GM12878 (cell line): ENCODE measurements at regions of chr7 and their contacts with region 1.

Region 1: DNA sequence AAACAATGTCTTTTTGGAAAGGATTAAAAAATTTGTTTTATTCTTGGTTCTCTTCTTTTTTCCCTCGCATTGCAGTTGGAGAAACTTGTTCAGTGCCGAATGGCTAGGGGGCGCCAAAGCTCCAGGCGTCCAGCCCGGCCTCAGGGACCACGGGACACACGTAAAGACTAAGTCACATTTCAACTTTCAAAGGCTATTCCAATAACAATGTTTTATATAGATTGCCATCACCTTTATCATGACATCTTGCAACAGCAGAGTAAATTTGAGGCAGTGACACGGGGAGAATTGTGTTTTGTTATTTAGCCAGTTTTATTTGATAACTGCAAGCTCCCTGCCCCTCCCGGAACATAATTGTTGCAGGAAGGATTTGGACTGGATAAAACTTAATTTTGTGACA is 2.2 kb upstream of the IGFBP3 start:
- DNase-seq: no peak
- ATAC-seq: peak; percentile 75
- H3K4me3 ChIP-seq: no peak overlapping the region
- H3K27ac ChIP-seq: no peak overlapping the region
- H3K4me1 ChIP-seq: no peaks in the 10 kb centered on the region
- H3K27me3 ChIP-seq: peaks cover 1 to 3% of the 10 kb centered on the region in 2 experiments; a peak in 3 of 4 replicates
- CTCF ChIP-seq: peak; percentile 79 to 90 (median 87)
- EP300 ChIP-seq: no peak
- POLR2A ChIP-seq: no peak
- RAD21 ChIP-seq: peak; percentile 94

Region 2: GRCh38 chr7:45985902-45986301 is 62.6 kb after region 1 on chr7:
- CTCF ChIA-PET with region 1: interaction called, 18 read pairs
- POLR2A ChIA-PET with region 1: no interaction called
- RAD21 ChIA-PET with region 1: interaction called, 19 read pairs
- SMC1A ChIA-PET with region 1: interaction called, 29 read pairs
- in situ Hi-C with region 1: no loop called
- intact Hi-C with region 1: no loop called
- DNase-seq: no peak
- ATAC-seq: no peak
- H3K4me3 ChIP-seq: no peak overlapping the region
- H3K27ac ChIP-seq: no peak overlapping the region
- H3K4me1 ChIP-seq: no peaks in the 10 kb centered on the region
- H3K27me3 ChIP-seq: no peaks in the 10 kb centered on the region
- CTCF ChIP-seq: no peak
- EP300 ChIP-seq: no peak
- POLR2A ChIP-seq: no peak
- RAD21 ChIP-seq: no peak

Region 3: GRCh38 chr7:46139079-46139478 is 215.8 kb after region 1 on chr7:
- CTCF ChIA-PET with region 1: interaction called, 16 read pairs
- POLR2A ChIA-PET with region 1: no interaction called
- RAD21 ChIA-PET with region 1: interaction called, 18 read pairs
- SMC1A ChIA-PET with region 1: interaction called, 10 read pairs
- in situ Hi-C with region 1: no loop called
- intact Hi-C with region 1: loop called (anchors 5 kb)
- DNase-seq: peak; percentile 48
- ATAC-seq: peak; percentile 95
- H3K4me3 ChIP-seq: no peak overlapping the region
- H3K27ac ChIP-seq: no peak overlapping the region
- H3K4me1 ChIP-seq: no peaks in the 10 kb centered on the region
- H3K27me3 ChIP-seq: no peaks in the 10 kb centered on the region
- CTCF ChIP-seq: no peak
- EP300 ChIP-seq: peak; percentile 76 to 91
- POLR2A ChIP-seq: no peak
- RAD21 ChIP-seq: no peak

Region 4: GRCh38 chr7:46282155-46282554 is 358.9 kb after region 1 on chr7:
- CTCF ChIA-PET with region 1: interaction called, 16 read pairs
- POLR2A ChIA-PET with region 1: no interaction called
- RAD21 ChIA-PET with region 1: interaction called, 35 read pairs
- SMC1A ChIA-PET with region 1: interaction called, 10 read pairs
- in situ Hi-C with region 1: no loop called
- intact Hi-C with region 1: no loop called
- DNase-seq: peak; percentile 15
- ATAC-seq: peak; percentile 78
- H3K4me3 ChIP-seq: no peak overlapping the region
- H3K27ac ChIP-seq: no peak overlapping the region; the same call in 1 of the 2 replicates
- H3K4me1 ChIP-seq: no peaks in the 10 kb centered on the region
- H3K27me3 ChIP-seq: no peaks in the 10 kb centered on the region
- CTCF ChIP-seq: no peak
- EP300 ChIP-seq: 0 out of 4 replicates have a peak, but pooled peaks of 1 of the 2 experiments have one; percentile 5
- POLR2A ChIP-seq: no peak
- RAD21 ChIP-seq: no peak

Region 5: GRCh38 chr7:46352004-46352954 is 429.0 kb after region 1 on chr7:
- CTCF ChIA-PET with region 1: interaction called, 127 read pairs
- POLR2A ChIA-PET with region 1: no interaction called
- RAD21 ChIA-PET with region 1: interaction called, 97 read pairs
- SMC1A ChIA-PET with region 1: interaction called, 130 read pairs
- in situ Hi-C with region 1: loop called (anchors 5 kb)
- intact Hi-C with region 1: loop called (anchors 1 kb)
- DNase-seq: peak; percentile 35
- ATAC-seq: peak; percentile 82
- H3K4me3 ChIP-seq: no peak overlapping the region
- H3K27ac ChIP-seq: no peak overlapping the region
- H3K4me1 ChIP-seq: no peaks in the 10 kb centered on the region
- H3K27me3 ChIP-seq: no peaks in the 10 kb centered on the region
- CTCF ChIP-seq: peak; percentile 51 to 88 (median 62)
- EP300 ChIP-seq: no peak
- POLR2A ChIP-seq: no peak
- RAD21 ChIP-seq: peak; percentile 93

Region 6: GRCh38 chr7:47088329-47089067 is 1165.2 kb after region 1 on chr7:
- CTCF ChIA-PET with region 1: interaction called, 91 read pairs
- POLR2A ChIA-PET with region 1: no interaction called
- RAD21 ChIA-PET with region 1: interaction called, 41 read pairs
- SMC1A ChIA-PET with region 1: interaction called, 30 read pairs
- in situ Hi-C with region 1: loop called (anchors 5 kb)
- intact Hi-C with region 1: no loop called
- DNase-seq: no peak
- ATAC-seq: peak; percentile 89
- H3K4me3 ChIP-seq: no peak overlapping the region
- H3K27ac ChIP-seq: no peak overlapping the region
- H3K4me1 ChIP-seq: no peaks in the 10 kb centered on the region
- H3K27me3 ChIP-seq: no peaks in the 10 kb centered on the region
- CTCF ChIP-seq: peak; percentile 74 to 86 (median 76)
- EP300 ChIP-seq: no peak
- POLR2A ChIP-seq: no peak
- RAD21 ChIP-seq: peak; percentile 90

Region 7: DNA sequence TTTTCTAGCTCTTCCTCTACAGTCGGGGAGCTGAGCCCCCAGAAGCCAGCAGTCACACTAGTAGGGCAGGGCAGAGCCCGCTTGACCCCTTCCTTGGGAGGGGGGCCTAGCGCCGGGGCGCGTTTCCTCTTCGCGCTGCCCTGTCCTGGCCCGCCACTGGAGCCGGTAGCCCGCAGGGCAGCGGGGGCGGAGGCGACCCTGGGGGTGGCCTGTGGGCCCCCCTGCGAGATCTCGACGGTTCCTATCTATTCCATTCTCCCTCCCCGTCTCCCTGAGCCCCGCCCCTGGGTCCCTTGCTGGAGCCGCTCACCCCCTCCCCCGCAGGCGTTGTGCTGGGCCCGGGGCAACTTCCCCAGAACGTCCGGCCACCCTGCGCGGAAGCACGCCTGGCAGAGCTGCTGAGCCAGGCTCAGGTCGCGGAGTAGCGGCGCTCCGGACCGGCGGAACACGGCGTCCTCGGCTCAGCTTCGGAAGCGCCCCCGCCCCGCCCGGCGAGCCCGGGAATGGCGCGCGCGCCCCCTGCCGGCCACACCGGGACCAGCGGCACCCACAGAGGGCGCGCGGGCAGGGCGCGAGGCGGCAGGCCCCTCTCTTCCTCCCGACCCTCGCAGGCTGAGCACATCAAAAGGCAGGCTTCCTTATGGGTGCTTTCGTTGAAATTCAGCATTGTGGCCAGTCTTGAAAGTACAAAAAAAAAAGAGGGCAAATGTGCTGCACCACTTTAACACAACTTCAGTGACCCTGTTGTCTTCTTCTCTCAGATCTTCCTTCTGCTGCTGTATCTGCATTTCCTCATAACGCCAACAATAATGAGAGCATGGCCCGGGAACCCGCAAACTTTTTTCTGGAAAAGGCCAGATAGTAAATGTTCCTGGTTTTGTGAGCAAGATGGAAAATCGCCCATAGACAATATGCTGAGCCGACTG is 1331.1 kb after region 1 on chr7:
- CTCF ChIA-PET with region 1: interaction called, 17 read pairs
- POLR2A ChIA-PET with region 1: no interaction called
- RAD21 ChIA-PET with region 1: interaction called, 8 read pairs
- SMC1A ChIA-PET with region 1: no interaction called
- in situ Hi-C with region 1: no loop called
- intact Hi-C with region 1: loop called (anchors 10 kb)
- DNase-seq: no peak
- ATAC-seq: peak; percentile 97
- H3K4me3 ChIP-seq: peak overlapping the region; percentile 27; the same call in 1 of the 2 replicates
- H3K27ac ChIP-seq: no peak overlapping the region
- H3K4me1 ChIP-seq: no peaks in the 10 kb centered on the region
- H3K27me3 ChIP-seq: peaks cover 0 to 4% of the 10 kb centered on the region in 2 experiments; a peak in 2 of 4 replicates
- CTCF ChIP-seq: peak; percentile 63 to 78 (median 65); a peak in 5 of 6 replicates
- EP300 ChIP-seq: no peak
- POLR2A ChIP-seq: no peak
- RAD21 ChIP-seq: peak; percentile 38